Activated CD4-positive, alpha-beta memory T cell treated with anti-CD3 and anti-CD28 coated beads, Interleukin-2, amount 10 ng/mL, durations not matched to agents 7 days and 5 days (primary cell): ENCODE measurements at regions of chr10 and their contacts with region 1.

Region 1: DNA sequence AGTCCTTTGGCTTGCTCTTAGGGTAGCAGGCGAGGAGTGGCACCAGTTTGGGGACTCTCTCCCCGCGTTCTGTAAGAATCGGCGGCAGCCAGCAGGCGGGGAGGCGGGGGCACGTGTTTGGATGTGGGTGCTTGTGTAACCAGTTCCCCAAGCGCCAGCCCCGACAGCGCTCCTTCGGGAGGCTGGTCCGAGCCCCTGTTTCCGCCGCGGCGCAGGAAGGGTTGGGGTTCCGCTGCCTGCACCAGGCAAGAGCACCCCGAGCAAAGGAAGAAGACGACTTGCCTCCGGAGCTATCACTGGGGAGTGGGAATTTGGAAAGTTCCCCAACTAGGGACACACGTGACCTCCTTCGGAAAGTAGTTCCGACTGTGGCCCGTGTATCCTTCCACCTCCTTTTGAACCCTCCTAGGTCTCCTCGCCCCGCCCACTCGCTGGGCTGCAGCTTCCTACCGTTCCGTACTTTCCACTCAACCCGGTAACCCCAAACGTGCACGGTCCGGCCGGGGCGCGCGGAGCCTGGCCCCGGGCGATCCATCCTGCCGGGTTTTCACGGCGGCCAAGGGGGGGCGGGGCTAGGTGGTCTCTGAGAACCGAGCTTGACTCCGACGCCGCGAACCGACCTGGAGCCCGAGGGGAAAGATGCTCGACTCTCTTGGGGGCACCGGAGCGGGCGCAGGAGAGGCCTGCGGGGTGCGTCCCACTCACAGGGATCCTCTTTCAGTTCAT is 1.2 kb downstream of the KLLN start:
- DNase-seq: peak; percentile 95
- H3K4me3 Mint-ChIP-seq: peak overlapping the region; percentile 92
- H3K27ac Mint-ChIP-seq: peak overlapping the region; percentile 93
- H3K4me1 Mint-ChIP-seq: peaks cover 29% of the 10 kb centered on the region
- H3K27me3 Mint-ChIP-seq: no peaks in the 10 kb centered on the region

Region 2: GRCh38 chr10:87842776-87843497 is 19.2 kb before region 1 on chr10:
- CTCF ChIA-PET with region 1: interaction called, 3 read pairs
- POLR2A ChIA-PET with region 1: interaction called, 11 read pairs
- DNase-seq: no peak
- H3K4me3 Mint-ChIP-seq: no peak overlapping the region
- H3K27ac Mint-ChIP-seq: no peak overlapping the region
- H3K4me1 Mint-ChIP-seq: peaks cover 10% of the 10 kb centered on the region
- H3K27me3 Mint-ChIP-seq: no peaks in the 10 kb centered on the region

Region 3: DNA sequence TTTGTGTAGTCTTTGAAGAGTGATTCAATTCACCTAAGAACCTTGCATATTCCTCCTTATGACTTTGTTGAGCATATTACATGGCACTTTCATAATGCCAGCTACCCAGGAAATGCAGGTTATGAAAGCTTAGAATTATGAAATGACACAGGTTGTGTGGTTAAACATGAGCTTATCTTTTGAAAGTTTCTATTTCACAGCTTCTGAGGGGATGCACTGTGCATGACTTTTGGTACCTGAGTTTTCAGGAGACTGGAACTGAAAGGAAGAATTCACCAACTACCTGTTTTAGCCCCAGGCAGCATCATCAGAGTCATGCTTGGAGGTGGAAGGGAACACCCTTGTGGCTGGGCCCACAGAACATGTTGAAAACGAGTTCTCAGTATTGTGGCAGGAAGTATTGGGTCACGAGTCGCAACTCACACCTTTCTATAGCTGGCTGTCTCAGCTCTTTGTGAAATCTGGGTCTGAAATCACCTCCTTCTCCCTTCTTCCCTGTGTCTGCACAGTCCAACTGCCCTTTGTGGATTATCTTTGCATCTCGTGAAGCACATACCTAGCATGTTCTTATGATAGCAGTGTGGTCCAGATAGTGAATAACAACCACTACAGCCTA is 229.5 kb after region 1 on chr10:
- CTCF ChIA-PET with region 1: no interaction called
- POLR2A ChIA-PET with region 1: interaction called, 26 read pairs
- DNase-seq: peak; percentile 85
- H3K4me3 Mint-ChIP-seq: no peak overlapping the region
- H3K27ac Mint-ChIP-seq: peak overlapping the region; percentile 85
- H3K4me1 Mint-ChIP-seq: peaks cover 38% of the 10 kb centered on the region
- H3K27me3 Mint-ChIP-seq: peaks cover 28% of the 10 kb centered on the region

Region 4: GRCh38 chr10:88108115-88108610 is 246.0 kb after region 1 on chr10:
- CTCF ChIA-PET with region 1: no interaction called
- POLR2A ChIA-PET with region 1: no interaction called
- DNase-seq: no peak
- H3K4me3 Mint-ChIP-seq: no peak overlapping the region
- H3K27ac Mint-ChIP-seq: no peak overlapping the region
- H3K4me1 Mint-ChIP-seq: peaks cover 9% of the 10 kb centered on the region
- H3K27me3 Mint-ChIP-seq: peaks cover 5% of the 10 kb centered on the region

Region 5: DNA sequence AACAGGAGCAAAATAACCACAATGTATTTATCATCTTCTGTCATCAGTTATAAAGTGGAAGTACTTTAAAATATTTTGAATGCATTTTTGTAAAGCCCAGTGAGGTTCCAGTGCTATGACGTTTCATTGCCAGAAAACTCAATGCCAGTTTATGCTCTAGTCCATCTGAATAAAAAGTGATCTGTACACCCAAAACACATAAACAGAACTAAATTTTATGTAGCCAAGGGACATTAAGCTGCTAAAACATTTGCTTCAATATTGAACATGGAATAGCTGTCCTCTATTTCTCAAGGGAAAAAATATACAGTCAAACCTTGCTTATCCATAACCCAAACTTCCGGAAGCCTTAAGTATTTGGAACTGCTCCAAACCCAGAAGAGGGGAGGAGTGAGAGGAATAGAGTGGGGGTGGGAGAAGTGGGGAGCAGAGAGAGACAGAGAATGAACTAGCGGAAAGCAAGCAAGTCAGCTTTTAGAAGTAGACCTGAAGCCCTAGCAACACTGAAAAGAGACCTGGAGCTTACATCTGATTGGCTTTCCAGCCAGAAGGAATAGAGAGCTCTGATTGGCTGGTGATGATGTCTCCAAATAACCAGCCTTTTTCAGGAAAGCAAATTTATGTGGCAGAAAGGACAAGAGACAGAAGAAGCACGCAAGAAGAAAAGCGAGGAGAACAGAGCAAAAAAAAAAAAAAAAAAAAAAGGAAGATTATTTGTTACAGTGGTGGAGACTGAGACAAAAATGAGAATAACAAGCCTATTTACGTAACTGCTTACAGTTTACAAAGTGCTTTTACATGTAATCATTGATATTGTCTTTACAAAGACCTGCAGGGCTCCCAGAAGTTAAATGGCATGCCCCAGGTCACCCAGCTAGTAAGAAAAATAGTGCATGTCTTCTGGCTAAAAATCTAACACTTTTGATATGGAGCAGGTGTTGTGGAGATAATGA is 525.0 kb after region 1 on chr10:
- CTCF ChIA-PET with region 1: interaction called, 52 read pairs
- POLR2A ChIA-PET with region 1: interaction called, 136 read pairs
- DNase-seq: no peak
- H3K4me3 Mint-ChIP-seq: no peak overlapping the region
- H3K27ac Mint-ChIP-seq: no peak overlapping the region
- H3K4me1 Mint-ChIP-seq: peaks cover 27% of the 10 kb centered on the region
- H3K27me3 Mint-ChIP-seq: no peaks in the 10 kb centered on the region

Region 6: DNA sequence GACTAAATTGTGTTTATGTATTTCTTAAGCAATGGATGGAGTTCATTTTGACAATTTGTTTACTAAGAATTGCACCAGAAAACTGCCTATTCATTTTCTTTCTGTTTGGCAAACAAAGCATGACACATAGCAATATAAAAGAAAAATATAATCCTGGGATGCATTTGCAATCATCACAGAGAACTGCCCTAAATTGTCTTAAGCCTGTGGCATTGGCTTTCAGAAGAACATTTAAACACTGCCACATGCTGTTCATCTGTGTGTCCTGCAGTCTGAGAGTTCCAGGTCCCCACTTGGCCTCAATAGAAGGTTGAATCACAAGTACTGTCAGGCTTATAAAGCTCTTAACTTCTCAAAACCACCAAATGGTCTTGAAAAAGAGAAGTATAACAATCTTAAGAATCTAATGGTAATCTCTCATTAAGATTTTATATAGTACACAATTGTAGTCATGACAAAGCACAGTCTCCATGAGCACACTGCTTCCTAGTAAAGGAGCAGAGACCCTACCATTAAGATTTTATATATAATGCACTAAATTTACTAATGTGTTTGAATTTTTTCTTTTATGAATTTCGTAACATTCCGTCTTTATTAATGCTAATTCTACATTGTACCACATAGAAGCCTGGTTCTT is 691.1 kb after region 1 on chr10:
- CTCF ChIA-PET with region 1: interaction called, 5 read pairs
- POLR2A ChIA-PET with region 1: interaction called, 12 read pairs
- DNase-seq: peak; percentile 52
- H3K4me3 Mint-ChIP-seq: no peak overlapping the region
- H3K27ac Mint-ChIP-seq: no peak overlapping the region
- H3K4me1 Mint-ChIP-seq: peaks cover 3% of the 10 kb centered on the region
- H3K27me3 Mint-ChIP-seq: no peaks in the 10 kb centered on the region